Activated B cell treated with CpG ODN at 0.5 μM for 24 hours (primary cell): ENCODE measurements at regions of chr5 and their contacts with region 1.

Region 1: DNA sequence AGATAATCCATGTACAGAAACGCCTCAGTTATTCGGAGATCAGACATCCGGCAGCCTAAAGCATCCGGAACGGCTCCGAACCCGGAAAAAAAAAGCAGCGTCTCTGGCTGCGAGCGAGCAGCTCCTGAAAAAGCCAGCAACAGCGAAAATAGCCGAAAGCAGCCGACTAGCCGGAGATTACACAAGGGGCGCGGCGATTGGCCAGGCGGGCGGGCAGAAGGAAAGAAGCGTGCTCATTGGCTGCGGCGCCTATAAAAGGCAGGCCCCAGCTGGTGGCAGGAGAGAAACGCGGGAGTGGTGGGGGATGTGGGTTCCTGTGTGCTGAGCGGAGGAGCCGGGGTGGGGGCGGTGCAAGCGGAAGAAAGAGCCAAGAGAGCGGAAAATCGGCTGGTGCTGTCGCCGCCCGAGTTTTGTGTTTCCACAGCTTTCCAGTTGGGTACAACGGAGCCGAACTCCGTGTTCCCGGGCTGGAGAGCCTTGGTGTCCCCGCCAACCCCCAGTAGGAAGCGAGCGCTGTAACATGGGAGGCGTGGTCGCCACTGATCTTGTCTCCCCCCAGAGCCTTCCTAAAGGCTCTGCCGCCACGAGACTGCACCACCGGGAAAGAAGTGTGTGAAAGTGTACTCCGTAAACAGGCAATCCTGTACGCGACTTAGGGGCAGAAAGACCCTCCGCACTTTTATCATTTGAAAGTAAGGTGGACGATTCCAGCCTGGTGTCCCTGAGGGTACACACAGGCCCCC is at the start of gene ARL15:
- DNase-seq: peak; percentile 93
- ATAC-seq: peak; percentile 95
- H3K4me3 Mint-ChIP-seq: peak within 1 kb of the TSS; percentile 97
- H3K27ac Mint-ChIP-seq: peak within 1 kb of the TSS; percentile 91
- H3K4me1 Mint-ChIP-seq: peaks cover 24% of the 10 kb centered on the region
- H3K27me3 Mint-ChIP-seq: peaks cover 4% of the 10 kb centered on the region
- CTCF ChIP-seq: no peak
- total RNA-seq, gene ARL15: 13.0 and 17.5 TPM in 2 replicates

Region 2: GRCh38 chr5:52799983-52800393 is 1510.6 kb before region 1 on chr5:
- CTCF ChIA-PET with region 1: no interaction called
- POLR2A ChIA-PET with region 1: no interaction called
- intact Hi-C with region 1: loop called (anchors 10 kb)
- DNase-seq: peak; percentile 91
- ATAC-seq: peak; percentile 88
- H3K4me3 Mint-ChIP-seq: peak overlapping the region; percentile 93
- H3K27ac Mint-ChIP-seq: peak overlapping the region; percentile 90
- H3K4me1 Mint-ChIP-seq: peaks cover 57% of the 10 kb centered on the region
- H3K27me3 Mint-ChIP-seq: no peaks in the 10 kb centered on the region
- CTCF ChIP-seq: no peak

Region 3: DNA sequence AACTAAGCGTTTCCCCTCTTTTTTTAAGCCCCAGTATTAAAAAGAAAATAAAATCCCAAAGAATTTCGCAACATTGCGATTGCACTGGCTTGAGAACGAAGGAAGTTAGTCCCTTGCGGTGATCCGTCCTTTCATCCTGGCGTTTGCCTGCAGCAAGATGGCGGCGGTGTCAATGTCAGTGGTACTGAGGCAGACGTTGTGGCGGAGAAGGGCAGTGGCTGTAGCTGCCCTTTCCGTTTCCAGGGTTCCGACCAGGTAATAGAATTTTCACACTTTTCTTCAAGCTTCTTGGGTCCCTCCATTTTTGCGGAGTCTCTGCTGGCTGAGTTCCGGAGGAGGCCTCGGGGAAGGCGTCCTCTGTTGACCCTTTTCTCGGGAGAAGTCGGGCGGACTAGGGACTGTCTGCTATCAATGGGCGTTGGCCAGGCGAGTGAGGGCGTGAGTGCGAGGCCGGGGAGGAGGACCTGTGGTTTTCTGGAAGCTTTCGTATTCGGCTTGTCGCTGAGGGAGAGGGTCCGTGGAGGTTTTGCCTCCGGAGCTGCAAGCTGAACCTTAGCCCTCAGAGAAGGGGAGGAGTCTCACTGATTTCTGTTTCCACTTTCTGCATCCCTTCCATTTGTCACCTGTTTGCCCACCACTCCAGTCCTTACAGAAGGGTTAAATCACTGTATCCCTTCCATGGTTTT is 750.0 kb before region 1 on chr5 and contains the start of gene NDUFS4:
- CTCF ChIA-PET with region 1: no interaction called
- POLR2A ChIA-PET with region 1: no interaction called
- intact Hi-C with region 1: loop called (anchors 2 kb)
- DNase-seq: peak; percentile 50
- ATAC-seq: peak; percentile 93
- H3K4me3 Mint-ChIP-seq: peak within 1 kb of the TSS; percentile 100
- H3K27ac Mint-ChIP-seq: peak within 1 kb of the TSS; percentile 94
- H3K4me1 Mint-ChIP-seq: peaks cover 37% of the 10 kb centered on the region
- H3K27me3 Mint-ChIP-seq: peaks cover 14% of the 10 kb centered on the region
- CTCF ChIP-seq: no peak
- total RNA-seq, gene NDUFS4: 35.6 and 40.9 TPM in 2 replicates

Region 4: DNA sequence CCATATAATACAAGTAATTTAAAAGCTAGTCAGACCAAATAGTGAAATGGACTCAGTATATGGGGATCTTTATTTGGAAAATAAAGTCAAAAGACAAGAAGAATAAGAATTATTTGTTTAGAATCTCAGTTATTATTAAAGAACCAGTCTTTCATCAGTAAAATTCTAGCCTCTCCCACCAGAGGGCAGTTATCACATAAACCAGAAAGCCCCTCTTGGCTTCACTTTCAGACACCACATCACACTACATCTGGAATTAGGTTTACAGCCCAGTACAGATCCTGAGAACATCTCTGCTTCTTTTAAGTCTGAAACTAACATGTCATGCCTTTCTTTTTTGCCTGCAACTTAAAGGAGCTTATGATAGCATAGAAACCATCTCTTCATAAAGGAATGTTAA is 132.7 kb after region 1 on chr5:
- CTCF ChIA-PET with region 1: no interaction called
- POLR2A ChIA-PET with region 1: interaction called, 7 read pairs
- intact Hi-C with region 1: loop called (anchors 1 kb)
- DNase-seq: no peak
- ATAC-seq: no peak
- H3K4me3 Mint-ChIP-seq: no peak overlapping the region
- H3K27ac Mint-ChIP-seq: no peak overlapping the region
- H3K4me1 Mint-ChIP-seq: peaks cover 23% of the 10 kb centered on the region
- H3K27me3 Mint-ChIP-seq: no peaks in the 10 kb centered on the region
- CTCF ChIP-seq: no peak

Region 5: GRCh38 chr5:54867310-54867944 is 556.8 kb after region 1 on chr5:
- CTCF ChIA-PET with region 1: no interaction called
- POLR2A ChIA-PET with region 1: no interaction called
- intact Hi-C with region 1: loop called (anchors 2 kb)
- DNase-seq: no peak
- ATAC-seq: peak; percentile 77
- H3K4me3 Mint-ChIP-seq: peak overlapping the region; percentile 53
- H3K27ac Mint-ChIP-seq: no peak overlapping the region
- H3K4me1 Mint-ChIP-seq: peaks cover 4% of the 10 kb centered on the region
- H3K27me3 Mint-ChIP-seq: peaks cover 29% of the 10 kb centered on the region
- CTCF ChIP-seq: no peak

Region 6: DNA sequence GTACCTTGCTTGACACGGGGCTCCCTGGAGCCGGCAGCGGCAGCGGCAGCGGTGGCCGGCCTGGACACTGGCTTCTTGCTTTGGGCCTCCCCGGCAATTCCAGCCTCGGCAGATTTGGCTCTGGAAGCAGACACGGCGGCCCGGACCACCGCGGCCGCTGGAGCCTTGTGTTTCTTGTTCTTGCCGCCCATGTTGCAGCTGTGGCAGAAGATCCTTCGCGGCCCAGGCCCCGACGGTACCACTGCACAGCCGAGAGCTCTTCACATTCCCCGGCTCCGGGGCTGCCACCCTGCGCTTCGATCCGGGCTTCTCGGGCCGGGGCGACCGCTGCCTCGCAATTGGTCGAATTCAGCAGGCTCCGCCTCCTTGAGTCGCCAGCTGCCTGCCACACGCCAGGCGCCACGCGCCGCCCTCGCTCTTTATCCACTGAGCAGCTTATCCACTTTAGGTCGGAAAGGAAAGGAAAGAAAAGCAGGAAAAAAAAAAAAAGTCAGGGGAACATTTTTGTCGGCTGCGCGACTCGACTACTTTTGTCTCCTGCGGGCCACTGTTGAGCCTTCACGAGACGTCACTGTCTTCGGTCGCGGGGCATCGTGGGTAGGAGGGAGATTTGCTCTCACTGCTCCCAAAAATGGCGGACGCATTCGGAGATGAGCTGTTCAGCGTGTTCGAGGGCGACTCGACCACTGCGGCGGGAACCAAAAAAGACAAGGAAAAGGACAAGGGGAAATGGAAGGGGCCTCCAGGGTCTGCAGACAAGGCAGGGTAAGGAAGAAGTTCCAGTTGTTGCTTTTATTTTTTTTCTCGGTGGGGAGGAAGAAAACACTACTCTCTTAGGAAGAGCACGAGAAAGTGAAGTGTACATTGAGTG is 997.0 kb after region 1 on chr5 and contains the starts of genes DHX29 and MTREX:
- CTCF ChIA-PET with region 1: no interaction called
- POLR2A ChIA-PET with region 1: no interaction called
- intact Hi-C with region 1: loop called (anchors 5 kb)
- DNase-seq: peak; percentile 82
- ATAC-seq: peak; percentile 92
- H3K4me3 Mint-ChIP-seq: no peak within 1 kb of the TSS
- H3K27ac Mint-ChIP-seq: no peak within 1 kb of the TSS
- H3K4me1 Mint-ChIP-seq: peaks cover 31% of the 10 kb centered on the region
- H3K27me3 Mint-ChIP-seq: no peaks in the 10 kb centered on the region
- CTCF ChIP-seq: no peak
- total RNA-seq, gene DHX29: 17.4 TPM in 2 replicates
- total RNA-seq, gene MTREX: 98.8 and 106 TPM in 2 replicates